IMR-90 (cell line): ENCODE measurements at regions of chr2 and their contacts with region 1.

Region 1: GRCh38 chr2:216108967-216109921 is at the start of gene XRCC5:
- DNase-seq: peak; percentile 96
- ATAC-seq: peak; percentile 86
- H3K4me3 ChIP-seq: peak within 1 kb of the TSS; percentile 71
- H3K27ac ChIP-seq: peak within 1 kb of the TSS; percentile 87
- H3K4me1 ChIP-seq: peaks cover 2% of the 10 kb centered on the region
- H3K27me3 ChIP-seq: no peaks in the 10 kb centered on the region
- CTCF ChIP-seq: no peak
- POLR2A ChIP-seq: peak; percentile 91
- RAD21 ChIP-seq: no peak
- total RNA-seq, gene XRCC5: 352 and 509 TPM in 2 replicates

Region 2: DNA sequence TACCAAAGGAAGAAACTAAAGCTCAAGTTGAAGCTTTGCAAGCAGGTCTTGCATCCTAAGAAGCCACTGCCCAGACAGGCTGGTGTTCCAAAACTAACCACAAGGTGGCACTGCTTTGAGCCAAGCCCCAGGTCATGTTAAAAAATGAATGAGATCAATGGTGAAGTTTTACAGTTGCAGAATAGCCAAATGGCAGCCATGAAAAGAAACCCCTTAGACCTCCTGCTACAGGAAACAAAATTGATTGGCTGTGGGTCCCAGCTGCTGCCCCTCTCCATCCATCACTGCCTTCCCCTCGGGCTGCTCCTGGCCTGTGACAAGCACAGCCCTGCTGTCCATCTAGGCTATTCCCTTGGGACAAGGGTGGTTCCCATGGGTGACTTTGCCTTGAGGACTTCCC is 75.2 kb before region 1 on chr2:
- CTCF ChIA-PET with region 1: interaction called, 3 read pairs
- POLR2A ChIA-PET with region 1: no interaction called
- dilution Hi-C with region 1: no loop called
- in situ Hi-C with region 1: no loop called
- intact Hi-C with region 1: loop called (anchors 2 kb)
- DNase-seq: peak; percentile 77
- ATAC-seq: peak; percentile 59
- H3K4me3 ChIP-seq: no peak overlapping the region
- H3K27ac ChIP-seq: no peak overlapping the region
- H3K4me1 ChIP-seq: peaks cover 11% of the 10 kb centered on the region
- H3K27me3 ChIP-seq: no peaks in the 10 kb centered on the region
- CTCF ChIP-seq: peak; percentile 70
- POLR2A ChIP-seq: no peak
- RAD21 ChIP-seq: peak; percentile 55

Region 3: DNA sequence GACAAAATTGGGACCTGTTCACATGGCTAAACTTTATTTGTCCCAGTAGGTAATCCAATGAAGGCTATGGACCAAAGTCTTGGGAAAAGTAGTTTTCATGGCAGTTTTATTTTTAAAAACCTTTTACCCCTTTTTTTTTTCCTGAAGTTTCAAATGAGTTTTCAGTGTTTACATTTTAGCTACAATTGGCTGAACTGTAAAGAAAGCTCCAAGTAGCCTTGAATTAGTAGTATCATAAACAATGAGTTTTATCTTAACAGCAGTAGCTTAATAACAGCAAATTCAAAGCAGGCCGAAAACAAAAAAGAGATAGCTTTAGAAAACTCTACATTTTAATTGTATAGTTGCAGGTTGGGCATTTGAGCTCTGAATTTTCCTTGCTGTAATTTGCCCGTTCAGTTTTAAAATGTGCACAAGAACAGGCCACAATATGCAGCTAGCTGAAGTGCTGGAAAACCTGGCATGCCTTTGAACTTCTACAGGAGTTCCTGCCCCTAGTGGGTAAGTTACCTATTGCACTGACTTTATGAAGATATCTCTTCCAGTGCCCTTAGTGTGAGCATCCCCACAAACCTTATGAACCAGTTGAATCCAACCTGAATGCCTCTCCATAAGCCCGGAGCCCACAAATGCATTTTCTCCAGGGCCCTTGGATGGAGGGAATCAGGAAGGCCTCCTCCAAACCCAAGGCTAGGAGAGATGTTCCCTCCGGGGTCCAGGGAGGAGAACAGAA is 106.6 kb after region 1 on chr2:
- CTCF ChIA-PET with region 1: no interaction called
- POLR2A ChIA-PET with region 1: no interaction called
- dilution Hi-C with region 1: no loop called
- in situ Hi-C with region 1: no loop called
- intact Hi-C with region 1: no loop called
- DNase-seq: peak; percentile 40
- ATAC-seq: peak; percentile 48; the same call in 1 of the 2 replicates
- H3K4me3 ChIP-seq: no peak overlapping the region
- H3K27ac ChIP-seq: no peak overlapping the region
- H3K4me1 ChIP-seq: peaks cover 23% of the 10 kb centered on the region
- H3K27me3 ChIP-seq: no peaks in the 10 kb centered on the region
- CTCF ChIP-seq: peak; percentile 40
- POLR2A ChIP-seq: no peak
- RAD21 ChIP-seq: peak; percentile 30

Region 4: DNA sequence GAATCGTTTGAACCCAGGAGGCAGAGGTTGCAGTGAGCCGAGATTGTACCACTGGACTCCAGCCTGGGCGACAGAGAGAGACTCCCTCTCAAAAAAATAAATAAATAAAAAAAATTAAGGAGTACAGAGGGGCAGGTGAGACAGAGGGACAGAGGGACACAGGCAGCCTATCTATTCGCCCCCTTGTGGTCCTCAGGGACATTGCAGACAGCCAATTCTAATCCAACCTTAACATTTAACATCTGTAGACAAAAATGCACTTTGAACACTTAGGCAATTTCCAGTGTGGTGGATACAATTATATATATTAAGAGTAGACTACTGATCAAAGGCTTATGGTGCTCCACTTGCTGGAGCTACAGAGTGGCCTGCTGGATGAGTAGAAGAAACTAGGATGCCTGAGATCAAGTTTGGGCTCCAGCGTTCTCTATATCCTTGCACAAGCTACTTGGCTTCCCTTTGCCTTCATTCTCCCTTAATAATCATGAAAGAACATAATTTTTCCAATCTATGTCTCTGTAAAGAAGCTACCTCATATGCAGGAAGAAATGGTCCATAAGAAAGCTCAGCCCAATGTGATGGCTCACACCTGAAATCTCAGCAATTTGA is 294.9 kb after region 1 on chr2:
- CTCF ChIA-PET with region 1: no interaction called
- POLR2A ChIA-PET with region 1: no interaction called
- dilution Hi-C with region 1: no loop called
- in situ Hi-C with region 1: no loop called
- intact Hi-C with region 1: loop called (anchors 2 kb)
- DNase-seq: peak; percentile 37
- ATAC-seq: peak; percentile 91
- H3K4me3 ChIP-seq: no peak overlapping the region
- H3K27ac ChIP-seq: no peak overlapping the region
- H3K4me1 ChIP-seq: no peaks in the 10 kb centered on the region
- H3K27me3 ChIP-seq: no peaks in the 10 kb centered on the region; the same call in 1 of the 2 replicates
- CTCF ChIP-seq: peak; percentile 76
- POLR2A ChIP-seq: no peak
- RAD21 ChIP-seq: peak; percentile 82

Region 5: GRCh38 chr2:216498418-216499413 is 389.5 kb after region 1 on chr2 and contains the start of gene RPL37A:
- CTCF ChIA-PET with region 1: no interaction called
- POLR2A ChIA-PET with region 1: no interaction called
- dilution Hi-C with region 1: no loop called
- in situ Hi-C with region 1: no loop called
- intact Hi-C with region 1: loop called (anchors 2 kb)
- DNase-seq: peak; percentile 96
- ATAC-seq: peak; percentile 90
- H3K4me3 ChIP-seq: peak within 1 kb of the TSS; percentile 92
- H3K27ac ChIP-seq: peak within 1 kb of the TSS; percentile 89
- H3K4me1 ChIP-seq: peaks cover 11% of the 10 kb centered on the region
- H3K27me3 ChIP-seq: no peaks in the 10 kb centered on the region
- CTCF ChIP-seq: no peak
- POLR2A ChIP-seq: peak; percentile 97
- RAD21 ChIP-seq: no peak
- total RNA-seq, gene RPL37A: 341 and 804 TPM in 2 replicates